ENCODE measurements at regions of chr3 and their contacts with region 1.

Region 1: DNA sequence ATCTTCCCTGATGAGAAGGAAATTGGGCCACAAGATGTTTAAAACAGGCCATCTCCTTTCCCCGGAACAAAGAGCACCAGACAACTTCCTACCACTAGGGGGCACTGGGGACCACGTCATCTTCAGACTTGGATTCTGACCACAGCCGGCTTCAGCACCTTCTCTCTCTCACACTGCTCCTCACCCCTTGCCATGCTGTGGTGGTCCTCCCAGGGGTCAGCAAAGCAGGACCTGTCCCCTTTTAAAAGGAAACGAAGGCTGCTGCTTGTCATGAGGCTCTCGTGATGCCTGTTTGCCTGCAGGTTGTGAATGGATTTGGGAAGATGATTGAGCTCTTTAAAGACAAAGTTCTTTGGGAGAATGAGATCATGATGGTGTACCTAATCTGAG is 16.2 kb downstream of the RFT1 start:
- DNase-seq: peak; percentile 53 to 86 (median 77)
- ATAC-seq: peak; percentile 83
- H3K4me3 ChIP-seq: no peak overlapping the region
- H3K4me3 Mint-ChIP-seq: no peak overlapping the region
- H3K27ac ChIP-seq: no peak overlapping the region
- H3K27ac Mint-ChIP-seq: no peak overlapping the region
- H3K4me1 ChIP-seq: peaks cover 0 to 8% of the 10 kb centered on the region in 2 donors
- H3K4me1 Mint-ChIP-seq: peaks cover 10 to 23% (median 17%) of the 10 kb centered on the region in 7 donors
- H3K27me3 ChIP-seq: no peaks in the 10 kb centered on the region
- H3K27me3 Mint-ChIP-seq: no peaks in the 10 kb centered on the region

Region 2: GRCh38 chr3:52851348-52851747 is 262.7 kb before region 1 on chr3:
- CTCF ChIA-PET with region 1: no interaction called
- POLR2A ChIA-PET with region 1: no interaction called
- intact Hi-C with region 1: loop called (anchors 1 to 5 kb)
- DNase-seq: peak in 5 of 9 donors; percentile 22 to 40 (median 35)
- ATAC-seq: peak; percentile 70
- H3K4me3 ChIP-seq: no peak overlapping the region
- H3K4me3 Mint-ChIP-seq: no peak overlapping the region
- H3K27ac ChIP-seq: no peak overlapping the region
- H3K27ac Mint-ChIP-seq: no peak overlapping the region
- H3K4me1 ChIP-seq: no peaks in the 10 kb centered on the region
- H3K4me1 Mint-ChIP-seq: no peaks in the 10 kb centered on the region
- H3K27me3 ChIP-seq: no peaks in the 10 kb centered on the region
- H3K27me3 Mint-ChIP-seq: no peaks in the 10 kb centered on the region

Region 3: GRCh38 chr3:53160660-53161449 is 46.8 kb after region 1 on chr3 and contains the start of gene PRKCD:
- CTCF ChIA-PET with region 1: no interaction called
- POLR2A ChIA-PET with region 1: interaction called, 4 read pairs
- intact Hi-C with region 1: loop called (anchors 1 to 5 kb)
- DNase-seq: peak; percentile 55 to 81 (median 71)
- ATAC-seq: peak; percentile 82
- H3K4me3 ChIP-seq: peak within 1 kb of the TSS; percentile 68
- H3K4me3 Mint-ChIP-seq: peak within 1 kb of the TSS; percentile 80 to 95 (median 92)
- H3K27ac ChIP-seq: peak within 1 kb of the TSS; percentile 77
- H3K27ac Mint-ChIP-seq: peak within 1 kb of the TSS; percentile 75 to 94 (median 90)
- H3K4me1 ChIP-seq: peaks cover 9 to 22% of the 10 kb centered on the region in 2 donors
- H3K4me1 Mint-ChIP-seq: peaks cover 18 to 30% (median 23%) of the 10 kb centered on the region in 7 donors
- H3K27me3 ChIP-seq: no peaks in the 10 kb centered on the region
- H3K27me3 Mint-ChIP-seq: peaks cover 0 to 40% (median 12%) of the 10 kb centered on the region in 5 donors
- total RNA-seq, gene PRKCD: 10.2 to 72.8 (median 18.7) TPM

Region 4: GRCh38 chr3:53255775-53256703 is 142.0 kb after region 1 on chr3 and contains the start of gene TKT:
- CTCF ChIA-PET with region 1: no interaction called
- POLR2A ChIA-PET with region 1: no interaction called
- intact Hi-C with region 1: loop called in 1 of 2 experiments (anchors 5 kb)
- DNase-seq: peak; percentile 58 to 85 (median 67)
- ATAC-seq: peak; percentile 92
- H3K4me3 ChIP-seq: peak within 1 kb of the TSS; percentile 70
- H3K4me3 Mint-ChIP-seq: peak within 1 kb of the TSS; percentile 90 to 97 (median 92)
- H3K27ac ChIP-seq: peak within 1 kb of the TSS; percentile 76
- H3K27ac Mint-ChIP-seq: peak within 1 kb of the TSS; percentile 69 to 89 (median 84)
- H3K4me1 ChIP-seq: peaks cover 14% of the 10 kb centered on the region in 2 donors
- H3K4me1 Mint-ChIP-seq: peaks cover 19 to 39% (median 34%) of the 10 kb centered on the region in 7 donors
- H3K27me3 ChIP-seq: no peaks in the 10 kb centered on the region
- H3K27me3 Mint-ChIP-seq: peaks cover 0 to 4% (median 0%) of the 10 kb centered on the region in 5 donors
- total RNA-seq, gene TKT: 83.5 to 333 (median 121) TPM

Region 5: DNA sequence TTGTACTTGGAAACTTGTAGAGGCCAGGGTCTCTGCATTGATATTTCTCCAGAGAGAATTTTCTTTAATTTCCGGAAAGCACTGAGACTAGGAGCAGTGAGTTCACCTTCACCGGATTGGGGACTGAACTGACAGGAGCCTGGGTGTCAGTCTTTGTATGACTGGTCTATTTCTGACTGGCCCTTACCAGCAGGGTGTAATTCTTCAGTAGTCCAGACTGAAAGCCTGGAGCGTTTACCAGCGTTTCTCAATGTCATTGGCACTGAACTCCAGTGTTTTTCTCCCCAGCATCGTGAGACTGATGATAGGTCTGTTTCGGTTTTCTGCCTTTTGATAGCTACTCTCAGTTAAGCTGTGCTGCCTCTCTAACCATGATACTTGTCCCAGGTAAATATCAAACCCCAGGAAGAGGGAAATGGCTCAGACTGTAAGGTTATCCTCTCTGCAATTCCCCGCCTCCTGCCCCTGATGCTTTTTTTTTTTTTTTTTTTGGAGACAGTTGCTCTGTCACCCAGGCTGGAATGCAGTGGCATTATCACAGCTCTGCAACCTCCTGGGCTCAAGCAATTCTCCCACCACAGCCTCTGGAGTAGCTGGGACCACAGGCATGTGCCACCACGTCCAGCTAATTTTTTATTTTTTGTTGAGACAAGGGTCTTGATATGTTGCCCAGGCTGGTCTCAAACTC is 1112.0 kb after region 1 on chr3:
- CTCF ChIA-PET with region 1: no interaction called
- POLR2A ChIA-PET with region 1: no interaction called
- intact Hi-C with region 1: no loop called
- DNase-seq: no peak
- ATAC-seq: no peak
- H3K4me3 ChIP-seq: no peak overlapping the region
- H3K4me3 Mint-ChIP-seq: no peak overlapping the region
- H3K27ac ChIP-seq: no peak overlapping the region
- H3K27ac Mint-ChIP-seq: no peak overlapping the region
- H3K4me1 ChIP-seq: no peaks in the 10 kb centered on the region
- H3K4me1 Mint-ChIP-seq: no peaks in the 10 kb centered on the region
- H3K27me3 ChIP-seq: no peaks in the 10 kb centered on the region
- H3K27me3 Mint-ChIP-seq: peaks cover 0 to 9% (median 4%) of the 10 kb centered on the region in 5 donors

Measured in naive thymus-derived CD4-positive, alpha-beta T cell (primary cell).